GM12878 (cell line): ENCODE measurements at regions of chr12 and their contacts with region 1.

Region 1: GRCh38 chr12:6285063-6285477 is 25.4 kb upstream of the PLEKHG6 start:
- DNase-seq: no peak
- ATAC-seq: peak; percentile 96
- H3K4me3 ChIP-seq: no peak overlapping the region
- H3K27ac ChIP-seq: no peak overlapping the region
- H3K4me1 ChIP-seq: no peaks in the 10 kb centered on the region
- H3K27me3 ChIP-seq: no peaks in the 10 kb centered on the region; a peak in 1 of 4 replicates
- CTCF ChIP-seq: peak; percentile 91 to 96 (median 91); a peak in 5 of 6 replicates
- EP300 ChIP-seq: no peak
- POLR2A ChIP-seq: no peak
- RAD21 ChIP-seq: peak; percentile 95

Region 2: DNA sequence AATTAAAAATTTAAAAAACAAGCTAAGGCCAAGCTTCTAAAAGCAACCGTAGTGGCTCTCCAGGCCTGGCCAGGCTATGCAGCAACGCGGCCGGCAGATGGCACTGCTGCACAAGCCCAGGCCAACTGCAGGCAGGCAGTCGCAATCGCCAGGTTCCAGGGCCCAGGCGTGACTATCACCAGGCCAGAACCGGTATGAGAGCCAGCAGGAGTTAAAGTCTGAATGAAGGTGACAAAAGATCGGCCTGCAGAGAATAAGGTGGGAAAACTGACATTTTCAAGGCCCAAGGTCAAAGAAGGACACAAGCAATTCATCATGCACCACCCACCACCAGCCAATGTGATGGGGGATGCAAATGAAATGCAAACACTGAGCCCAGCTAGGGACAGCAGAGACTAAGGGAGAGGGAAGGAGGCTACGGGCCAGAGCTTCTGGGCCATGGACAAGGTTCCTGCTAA is 296.4 kb before region 1 on chr12:
- CTCF ChIA-PET with region 1: interaction called, 63 read pairs
- POLR2A ChIA-PET with region 1: no interaction called
- RAD21 ChIA-PET with region 1: interaction called, 8 read pairs
- SMC1A ChIA-PET with region 1: interaction called, 23 read pairs
- in situ Hi-C with region 1: loop called (anchors 5 kb)
- intact Hi-C with region 1: loop called (anchors 2 kb)
- DNase-seq: peak; percentile 4
- ATAC-seq: peak; percentile 100
- H3K4me3 ChIP-seq: no peak overlapping the region
- H3K27ac ChIP-seq: no peak overlapping the region
- H3K4me1 ChIP-seq: no peaks in the 10 kb centered on the region
- H3K27me3 ChIP-seq: peaks cover 0 to under 1% of the 10 kb centered on the region in 2 experiments; a peak in 1 of 4 replicates
- CTCF ChIP-seq: peak; percentile 96
- EP300 ChIP-seq: no peak
- POLR2A ChIP-seq: no peak
- RAD21 ChIP-seq: peak; percentile 88

Region 3: DNA sequence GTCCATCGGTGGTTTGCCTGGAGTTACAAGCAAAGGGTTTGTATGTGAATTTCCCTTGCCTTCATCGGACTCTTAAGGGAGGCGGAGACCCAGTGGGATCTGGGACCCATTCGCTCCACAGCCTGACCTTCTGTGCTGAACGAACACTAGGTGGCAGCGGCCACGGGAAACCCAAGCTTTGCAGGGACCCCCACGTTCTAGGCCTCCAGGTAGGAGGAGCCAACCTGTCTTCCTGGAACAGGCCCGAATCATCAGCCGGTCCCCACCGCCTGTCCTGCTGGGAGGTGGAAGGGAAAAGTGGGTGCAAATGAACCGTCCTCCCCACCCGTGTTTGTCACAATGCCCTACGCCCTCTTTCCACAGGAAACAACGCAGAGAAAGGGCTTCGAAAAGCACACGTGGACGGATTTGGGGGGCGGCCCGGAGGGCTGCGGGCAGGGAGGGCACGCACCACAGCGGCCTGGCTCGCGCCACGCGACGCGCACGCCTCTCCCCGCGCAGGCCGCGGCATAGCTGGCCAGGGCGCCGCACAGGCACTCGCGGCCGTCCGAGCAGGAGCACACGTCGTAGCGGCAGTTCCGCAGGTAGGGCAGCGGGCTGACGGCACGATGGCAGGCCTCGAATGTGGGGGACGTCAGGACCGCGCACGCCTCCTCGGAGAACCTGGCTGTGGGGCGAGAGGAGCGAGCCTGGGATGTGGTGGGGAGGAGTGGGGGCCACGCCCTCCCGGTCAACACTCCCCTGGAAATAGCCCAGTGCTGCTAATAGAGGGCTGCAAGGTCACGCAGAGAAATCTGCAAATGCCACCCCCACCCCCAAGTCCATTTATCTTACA is 228.4 kb before region 1 on chr12:
- CTCF ChIA-PET with region 1: interaction called, 18 read pairs
- POLR2A ChIA-PET with region 1: no interaction called
- RAD21 ChIA-PET with region 1: interaction called, 11 read pairs
- SMC1A ChIA-PET with region 1: interaction called, 3 read pairs
- in situ Hi-C with region 1: loop called (anchors 5 kb)
- intact Hi-C with region 1: no loop called
- DNase-seq: no peak
- ATAC-seq: peak; percentile 36; the same call in 2 of the 3 replicates
- H3K4me3 ChIP-seq: no peak overlapping the region
- H3K27ac ChIP-seq: no peak overlapping the region
- H3K4me1 ChIP-seq: no peaks in the 10 kb centered on the region
- H3K27me3 ChIP-seq: peaks cover 0 to 2% of the 10 kb centered on the region in 2 experiments; a peak in 1 of 4 replicates
- CTCF ChIP-seq: peak in 2 of 3 experiments; percentile 4 to 7; a peak in 2 of 6 replicates
- EP300 ChIP-seq: no peak
- POLR2A ChIP-seq: no peak
- RAD21 ChIP-seq: no peak

Region 4: DNA sequence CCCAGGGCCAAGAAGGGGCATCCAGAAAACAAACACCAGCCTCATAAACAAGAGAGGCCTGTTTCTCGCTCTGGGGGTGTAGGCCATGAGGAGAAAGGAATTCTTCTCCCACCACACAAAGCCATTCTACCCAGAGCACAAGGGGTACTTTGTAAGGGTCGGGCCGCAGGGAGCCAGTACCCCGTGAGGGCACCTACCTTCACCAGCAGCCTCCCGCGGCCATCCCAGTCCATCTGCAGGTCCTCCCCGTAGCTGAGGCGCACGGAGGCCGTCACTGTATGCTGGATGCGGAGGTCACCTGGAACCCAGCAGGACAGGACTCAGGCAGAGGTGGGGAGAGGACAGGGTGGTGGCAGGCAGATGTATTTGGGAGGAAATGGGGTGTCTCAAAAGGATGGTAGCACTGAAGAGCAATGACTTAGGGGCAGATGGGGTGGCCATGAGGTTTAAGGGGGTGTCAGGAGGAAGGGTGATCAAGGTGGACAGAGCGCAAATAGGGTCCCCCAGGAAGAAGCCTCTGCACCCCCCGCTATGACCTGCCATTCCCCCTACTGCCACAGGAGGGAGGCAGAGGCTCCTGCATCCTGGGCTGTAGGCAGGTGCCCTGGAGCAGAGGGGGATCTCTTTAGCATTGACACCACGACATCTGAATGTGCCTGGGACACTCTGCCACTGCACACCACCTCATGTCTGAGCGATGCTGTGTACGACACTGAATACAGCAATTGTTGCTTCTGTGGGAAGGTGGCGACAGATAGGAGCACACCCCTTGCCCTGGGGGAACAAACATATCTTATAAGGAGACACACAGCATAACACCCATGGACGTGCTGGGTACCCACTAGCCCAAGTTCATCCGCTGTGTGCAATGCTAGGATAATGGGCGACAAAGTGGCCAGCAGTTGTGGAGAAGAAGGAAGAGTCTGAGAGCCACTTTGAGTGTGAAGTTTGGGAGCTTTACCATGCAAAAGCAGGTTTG is 222.0 kb before region 1 on chr12:
- CTCF ChIA-PET with region 1: interaction called, 53 read pairs
- POLR2A ChIA-PET with region 1: no interaction called
- RAD21 ChIA-PET with region 1: interaction called, 38 read pairs
- SMC1A ChIA-PET with region 1: interaction called, 15 read pairs
- in situ Hi-C with region 1: loop called (anchors 5 kb)
- intact Hi-C with region 1: loop called (anchors 1 kb)
- DNase-seq: no peak
- ATAC-seq: peak; percentile 96
- H3K4me3 ChIP-seq: no peak overlapping the region
- H3K27ac ChIP-seq: no peak overlapping the region
- H3K4me1 ChIP-seq: no peaks in the 10 kb centered on the region
- H3K27me3 ChIP-seq: no peaks in the 10 kb centered on the region; a peak in 1 of 4 replicates
- CTCF ChIP-seq: peak; percentile 83 to 96 (median 94)
- EP300 ChIP-seq: no peak
- POLR2A ChIP-seq: no peak
- RAD21 ChIP-seq: peak; percentile 94

Region 5: GRCh38 chr12:6189028-6189427 is 96.0 kb before region 1 on chr12:
- CTCF ChIA-PET with region 1: interaction called, 401 read pairs
- POLR2A ChIA-PET with region 1: no interaction called
- RAD21 ChIA-PET with region 1: interaction called, 304 read pairs
- SMC1A ChIA-PET with region 1: interaction called, 24 read pairs
- in situ Hi-C with region 1: no loop called
- intact Hi-C with region 1: no loop called
- DNase-seq: no peak
- ATAC-seq: no peak; the same call in 2 of the 3 replicates
- H3K4me3 ChIP-seq: no peak overlapping the region
- H3K27ac ChIP-seq: no peak overlapping the region
- H3K4me1 ChIP-seq: no peaks in the 10 kb centered on the region
- H3K27me3 ChIP-seq: peaks cover 3 to 4% of the 10 kb centered on the region in 2 experiments; a peak in 3 of 4 replicates
- CTCF ChIP-seq: no peak
- EP300 ChIP-seq: no peak
- POLR2A ChIP-seq: no peak
- RAD21 ChIP-seq: no peak

Region 6: GRCh38 chr12:6205144-6205539 is 79.9 kb before region 1 on chr12:
- CTCF ChIA-PET with region 1: interaction called, 401 read pairs
- POLR2A ChIA-PET with region 1: interaction called, 43 read pairs
- RAD21 ChIA-PET with region 1: interaction called, 304 read pairs
- SMC1A ChIA-PET with region 1: interaction called, 40 read pairs
- in situ Hi-C with region 1: no loop called
- intact Hi-C with region 1: no loop called
- DNase-seq: no peak
- ATAC-seq: no peak
- H3K4me3 ChIP-seq: no peak overlapping the region
- H3K27ac ChIP-seq: no peak overlapping the region
- H3K4me1 ChIP-seq: no peaks in the 10 kb centered on the region
- H3K27me3 ChIP-seq: peaks cover 2 to 14% of the 10 kb centered on the region in 2 experiments; a peak in 3 of 4 replicates
- CTCF ChIP-seq: no peak
- EP300 ChIP-seq: no peak
- POLR2A ChIP-seq: no peak
- RAD21 ChIP-seq: no peak